Activated naive CD4-positive, alpha-beta T cell treated with anti-CD3 and anti-CD28 coated beads for 36 hours (primary cell): ENCODE measurements at regions of chr22 and their contacts with region 1.

Region 1: DNA sequence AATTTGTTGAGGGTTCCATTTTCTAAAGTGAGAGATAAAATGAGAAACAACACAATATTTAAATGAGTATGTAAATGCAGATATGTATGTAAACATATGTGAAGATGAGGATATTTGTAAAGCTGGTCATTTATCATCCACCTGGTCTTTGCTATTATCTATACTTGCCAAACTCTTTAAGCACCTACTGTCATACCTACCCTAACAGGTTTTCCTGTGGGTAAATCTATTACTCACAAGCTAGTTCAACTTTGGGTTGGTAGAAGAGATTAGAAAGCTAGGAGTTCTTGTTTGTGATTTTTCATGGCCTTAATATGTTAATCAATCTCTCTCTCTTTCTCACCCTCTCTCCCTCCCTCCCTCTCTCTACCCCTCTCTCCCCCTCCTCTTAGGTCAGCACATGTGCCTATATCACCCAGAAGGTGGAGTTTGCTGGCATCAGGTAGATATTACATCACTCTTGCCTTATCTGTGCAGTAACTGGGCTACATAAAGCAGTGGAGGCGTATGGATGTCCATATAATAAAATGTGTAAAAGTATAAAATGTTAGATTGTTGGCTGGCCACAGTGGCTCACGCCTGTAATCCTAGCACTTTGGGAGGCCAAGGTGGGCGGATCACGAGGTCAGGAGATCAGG is 14.7 kb downstream of the DEPDC5 start:
- DNase-seq: no peak
- H3K4me3 Mint-ChIP-seq: no peak overlapping the region
- H3K27ac Mint-ChIP-seq: peak overlapping the region; percentile 50
- H3K4me1 Mint-ChIP-seq: peaks cover 12% of the 10 kb centered on the region
- H3K27me3 Mint-ChIP-seq: no peaks in the 10 kb centered on the region

Region 2: GRCh38 chr22:31646186-31647089 is 122.1 kb before region 1 on chr22:
- CTCF ChIA-PET with region 1: no interaction called
- intact Hi-C with region 1: no loop called
- DNase-seq: peak; percentile 76
- H3K4me3 Mint-ChIP-seq: no peak overlapping the region
- H3K27ac Mint-ChIP-seq: peak overlapping the region; percentile 91
- H3K4me1 Mint-ChIP-seq: peaks cover 53% of the 10 kb centered on the region
- H3K27me3 Mint-ChIP-seq: no peaks in the 10 kb centered on the region

Region 3: DNA sequence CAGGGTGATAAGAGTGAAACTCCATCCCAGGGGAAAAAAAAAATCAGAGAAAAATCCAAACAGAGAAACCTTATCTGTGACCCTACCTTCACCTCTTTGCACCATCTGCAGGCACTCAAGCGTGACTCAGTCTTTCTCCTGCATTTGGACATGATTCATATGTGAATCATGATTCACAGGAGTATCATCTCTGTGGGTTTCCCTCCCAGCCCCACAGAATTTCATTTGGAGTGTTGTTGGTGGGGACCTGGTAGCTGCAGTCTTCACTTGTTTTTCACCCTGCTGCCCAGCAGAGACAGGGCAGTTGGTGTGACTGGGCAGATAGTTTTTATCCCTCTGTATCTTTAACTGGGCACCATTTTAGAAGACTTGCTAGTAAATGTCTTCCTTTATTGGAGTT is 61.0 kb after region 1 on chr22:
- CTCF ChIA-PET with region 1: no interaction called
- intact Hi-C with region 1: loop called (anchors 2 kb)
- DNase-seq: peak; percentile 77
- H3K4me3 Mint-ChIP-seq: no peak overlapping the region
- H3K27ac Mint-ChIP-seq: no peak overlapping the region
- H3K4me1 Mint-ChIP-seq: peaks cover 22% of the 10 kb centered on the region
- H3K27me3 Mint-ChIP-seq: no peaks in the 10 kb centered on the region